A549 (cell line): ENCODE measurements at regions of chr10 and their contacts with region 1.

Region 1: DNA sequence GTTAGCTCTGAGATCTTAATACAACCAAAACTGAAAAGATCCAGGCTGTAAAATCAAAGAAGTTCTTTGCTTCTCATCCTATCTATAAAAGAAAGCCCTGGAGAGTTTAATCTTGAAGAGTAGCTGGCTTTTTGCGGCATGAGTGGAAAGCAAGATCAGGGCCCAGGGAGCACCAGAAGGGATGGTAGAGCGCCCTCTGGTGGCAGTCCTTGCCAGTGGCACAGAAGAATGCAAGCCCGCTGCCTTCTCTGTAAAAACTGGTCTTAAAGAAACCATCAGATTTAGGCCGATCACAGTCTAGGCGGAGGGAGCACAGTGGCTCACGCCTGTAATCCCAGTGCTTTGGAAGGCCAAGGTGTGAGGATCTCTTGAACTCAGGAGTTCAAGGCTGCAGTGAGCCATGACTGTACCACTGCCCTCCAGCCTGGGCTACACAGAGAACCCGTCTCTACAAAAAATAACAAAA is 35.6 kb downstream of the CPN1 start:
- DNase-seq: peak; percentile 67 to 86
- ATAC-seq: peak; percentile 94
- H3K4me3 ChIP-seq: no peak overlapping the region
- H3K27ac ChIP-seq: peak overlapping the region; percentile 25 to 78; a peak in 5 of 6 replicates
- H3K4me1 ChIP-seq: peaks cover 26% of the 10 kb centered on the region
- CTCF ChIP-seq: peak; percentile 97
- EP300 ChIP-seq: 0 out of 5 replicates have a peak, but pooled peaks of 1 of the 2 experiments have one; percentile 4
- POLR2A ChIP-seq: no peak
- RAD21 ChIP-seq: peak; percentile 94 to 96

Region 2: GRCh38 chr10:99665298-99665697 is 380.8 kb before region 1 on chr10:
- CTCF ChIA-PET with region 1: no interaction called
- POLR2A ChIA-PET with region 1: no interaction called
- DNase-seq: no peak
- ATAC-seq: no peak
- H3K4me3 ChIP-seq: no peak overlapping the region
- H3K27ac ChIP-seq: no peak overlapping the region
- H3K4me1 ChIP-seq: peaks cover 28% of the 10 kb centered on the region
- CTCF ChIP-seq: no peak
- EP300 ChIP-seq: no peak
- POLR2A ChIP-seq: no peak
- RAD21 ChIP-seq: no peak

Region 3: DNA sequence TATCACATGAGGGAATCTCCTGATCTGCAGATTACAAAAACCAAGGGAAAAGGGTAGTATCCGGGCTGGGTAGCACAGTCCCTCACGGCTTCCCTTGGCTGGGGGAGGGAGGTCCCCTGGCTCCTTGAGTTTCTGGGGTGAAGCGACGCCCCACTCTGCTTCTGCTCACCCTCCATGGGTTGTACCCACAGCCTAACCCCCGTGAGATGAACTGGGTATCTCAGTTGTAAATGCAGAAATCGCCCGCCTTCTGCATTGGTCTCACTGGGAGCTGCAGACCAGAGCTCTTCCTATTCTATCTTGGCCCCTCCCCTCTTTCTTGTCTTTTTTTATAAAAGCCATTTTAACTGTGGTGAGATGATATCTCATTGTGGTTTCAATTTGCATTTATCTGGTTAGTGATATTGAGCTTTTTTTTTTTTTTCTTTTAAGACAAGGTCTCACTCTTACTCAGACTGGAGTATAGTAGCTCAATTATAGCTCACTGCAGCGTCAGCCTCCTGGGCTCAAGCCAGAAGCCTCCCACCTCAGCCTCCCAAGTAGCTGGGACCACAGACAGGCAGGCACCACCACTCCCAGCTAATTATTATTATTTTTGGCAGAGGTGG is 175.8 kb before region 1 on chr10:
- CTCF ChIA-PET with region 1: interaction called, 12 read pairs
- POLR2A ChIA-PET with region 1: no interaction called
- DNase-seq: no peak
- ATAC-seq: peak in 1 of 2 experiments; percentile 8; a peak in 2 of 6 replicates
- H3K4me3 ChIP-seq: no peak overlapping the region
- H3K27ac ChIP-seq: no peak overlapping the region
- H3K4me1 ChIP-seq: no peaks in the 10 kb centered on the region
- CTCF ChIP-seq: no peak
- EP300 ChIP-seq: no peak
- POLR2A ChIP-seq: no peak
- RAD21 ChIP-seq: no peak

Region 4: DNA sequence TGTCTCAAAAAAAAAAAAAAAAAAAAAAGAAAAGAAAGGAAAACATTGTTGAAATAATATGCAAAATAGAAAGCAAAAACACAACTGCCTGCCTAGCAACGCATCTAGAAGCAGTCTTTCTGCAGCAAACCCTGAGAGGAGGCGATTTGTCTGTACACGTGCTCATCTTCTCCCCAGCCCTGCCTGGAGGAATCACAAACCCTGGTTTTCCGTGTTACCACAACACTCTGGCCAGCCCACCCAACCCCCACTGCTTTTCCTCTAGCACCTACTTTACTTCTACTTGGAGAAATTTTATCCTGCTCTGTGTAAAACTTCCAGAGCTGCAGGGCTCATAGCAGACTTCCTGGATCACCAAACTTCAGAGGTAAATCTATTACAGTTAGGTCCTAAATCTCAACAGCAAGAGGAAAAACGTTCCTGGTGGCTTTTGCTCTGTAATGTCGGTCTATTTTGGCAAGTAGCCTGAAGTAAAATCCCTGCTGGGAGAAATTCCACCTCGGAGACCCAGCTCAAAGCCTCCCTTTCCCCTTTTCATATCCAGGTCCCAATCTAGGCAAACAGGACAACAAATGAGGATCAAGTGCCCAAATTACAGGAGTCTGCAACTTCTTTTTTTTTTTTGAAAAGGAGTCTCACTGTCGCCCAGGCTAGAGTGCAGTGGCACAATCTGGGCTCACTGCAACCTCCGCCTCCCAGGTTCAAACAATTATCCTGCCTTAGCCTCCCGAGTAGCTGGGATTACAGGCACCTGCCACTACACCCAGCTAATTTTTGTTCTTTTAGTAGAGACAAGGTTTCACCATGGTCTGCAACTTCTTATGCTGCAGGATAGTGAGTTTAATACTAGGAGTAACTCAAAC is 127.9 kb before region 1 on chr10:
- CTCF ChIA-PET with region 1: interaction called, 10 read pairs
- POLR2A ChIA-PET with region 1: no interaction called
- DNase-seq: peak in 1 of 2 experiments; percentile 56
- ATAC-seq: peak; percentile 76 to 82
- H3K4me3 ChIP-seq: peak overlapping the region; percentile 32
- H3K27ac ChIP-seq: peak overlapping the region; percentile 84 to 85
- H3K4me1 ChIP-seq: peaks cover 42% of the 10 kb centered on the region
- CTCF ChIP-seq: no peak
- EP300 ChIP-seq: no peak
- POLR2A ChIP-seq: no peak
- RAD21 ChIP-seq: no peak

Region 5: DNA sequence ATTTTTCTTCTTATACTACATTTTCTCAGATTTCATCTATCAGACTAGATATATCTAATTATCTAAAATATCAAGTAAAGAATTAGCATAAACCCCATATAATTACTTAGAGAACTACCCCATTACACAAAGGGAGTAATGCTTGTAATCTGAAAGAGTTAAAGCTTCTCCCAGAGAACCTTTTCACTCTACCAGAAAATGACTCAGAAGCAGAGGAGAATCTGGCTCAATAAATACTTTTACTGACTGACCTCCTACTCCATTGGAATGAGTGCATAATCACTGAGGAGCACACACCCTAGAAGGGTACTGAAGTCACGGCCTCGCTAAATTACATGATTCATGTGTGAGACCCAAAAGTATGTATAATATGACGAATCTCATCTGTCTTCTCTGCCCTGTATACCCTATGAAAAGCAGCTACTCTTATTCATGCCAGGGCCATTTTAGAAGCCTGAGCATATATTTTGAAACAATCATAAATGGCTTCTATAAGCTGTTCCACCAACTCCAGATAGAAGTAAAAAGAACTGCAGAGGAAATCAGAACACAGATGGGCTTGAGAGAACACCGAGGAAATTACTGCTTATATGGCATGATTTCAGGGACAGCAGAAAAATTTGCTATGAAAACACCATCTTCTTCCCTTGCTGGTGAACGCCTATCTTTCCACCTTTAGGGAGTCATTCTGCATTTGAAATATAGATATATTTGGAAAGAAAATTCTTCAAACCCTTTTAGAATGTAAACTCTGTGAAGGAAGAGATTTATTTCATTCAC is 69.0 kb before region 1 on chr10:
- CTCF ChIA-PET with region 1: interaction called, 11 read pairs
- POLR2A ChIA-PET with region 1: no interaction called
- DNase-seq: peak; percentile 55 to 82
- ATAC-seq: peak; percentile 91 to 95
- H3K4me3 ChIP-seq: peak overlapping the region; percentile 2; the same call in 1 of the 3 replicates
- H3K27ac ChIP-seq: peak overlapping the region; percentile 60 to 74
- H3K4me1 ChIP-seq: peaks cover 64% of the 10 kb centered on the region
- CTCF ChIP-seq: no peak
- EP300 ChIP-seq: no peak; a peak in 1 of 5 replicates
- POLR2A ChIP-seq: no peak
- RAD21 ChIP-seq: peak in 1 of 2 experiments; percentile 19; a peak in 1 of 5 replicates

Region 6: GRCh38 chr10:100061401-100061800 is 15.3 kb after region 1 on chr10:
- CTCF ChIA-PET with region 1: interaction called, 16 read pairs
- POLR2A ChIA-PET with region 1: no interaction called
- DNase-seq: no peak
- ATAC-seq: no peak
- H3K4me3 ChIP-seq: no peak overlapping the region
- H3K27ac ChIP-seq: no peak overlapping the region
- H3K4me1 ChIP-seq: no peaks in the 10 kb centered on the region
- CTCF ChIP-seq: no peak
- EP300 ChIP-seq: no peak
- POLR2A ChIP-seq: no peak
- RAD21 ChIP-seq: no peak

Region 7: GRCh38 chr10:100204370-100204769 is 158.3 kb after region 1 on chr10:
- CTCF ChIA-PET with region 1: no interaction called
- POLR2A ChIA-PET with region 1: no interaction called
- DNase-seq: no peak
- ATAC-seq: no peak
- H3K4me3 ChIP-seq: no peak overlapping the region
- H3K27ac ChIP-seq: no peak overlapping the region
- H3K4me1 ChIP-seq: no peaks in the 10 kb centered on the region
- CTCF ChIP-seq: no peak
- EP300 ChIP-seq: no peak
- POLR2A ChIP-seq: no peak
- RAD21 ChIP-seq: no peak